ENCODE measurements at regions of chr16 and their contacts with region 1.

Region 1: GRCh38 chr16:22297114-22297878 is at the start of gene POLR3E:
- DNase-seq: peak; percentile 98
- H3K4me3 Mint-ChIP-seq: peak within 1 kb of the TSS; percentile 86
- H3K27ac Mint-ChIP-seq: peak within 1 kb of the TSS; percentile 96
- H3K4me1 Mint-ChIP-seq: peaks cover 33% of the 10 kb centered on the region
- H3K27me3 Mint-ChIP-seq: no peaks in the 10 kb centered on the region
- CTCF ChIP-seq: peak; percentile 89
- total RNA-seq, gene POLR3E: 53.2 and 73.8 TPM in 2 replicates

Region 2: GRCh38 chr16:22018559-22018958 is 278.7 kb before region 1 on chr16:
- CTCF ChIA-PET with region 1: no interaction called
- POLR2A ChIA-PET with region 1: no interaction called
- intact Hi-C with region 1: no loop called
- DNase-seq: no peak
- H3K4me3 Mint-ChIP-seq: no peak overlapping the region
- H3K27ac Mint-ChIP-seq: peak overlapping the region; percentile 24
- H3K4me1 Mint-ChIP-seq: peaks cover 25% of the 10 kb centered on the region
- H3K27me3 Mint-ChIP-seq: no peaks in the 10 kb centered on the region
- CTCF ChIP-seq: no peak

Region 3: GRCh38 chr16:22077700-22078313 is 219.5 kb before region 1 on chr16:
- CTCF ChIA-PET with region 1: no interaction called
- POLR2A ChIA-PET with region 1: no interaction called
- intact Hi-C with region 1: no loop called
- DNase-seq: peak; percentile 69
- H3K4me3 Mint-ChIP-seq: no peak overlapping the region
- H3K27ac Mint-ChIP-seq: no peak overlapping the region
- H3K4me1 Mint-ChIP-seq: no peaks in the 10 kb centered on the region
- H3K27me3 Mint-ChIP-seq: no peaks in the 10 kb centered on the region
- CTCF ChIP-seq: peak; percentile 81

Region 4: DNA sequence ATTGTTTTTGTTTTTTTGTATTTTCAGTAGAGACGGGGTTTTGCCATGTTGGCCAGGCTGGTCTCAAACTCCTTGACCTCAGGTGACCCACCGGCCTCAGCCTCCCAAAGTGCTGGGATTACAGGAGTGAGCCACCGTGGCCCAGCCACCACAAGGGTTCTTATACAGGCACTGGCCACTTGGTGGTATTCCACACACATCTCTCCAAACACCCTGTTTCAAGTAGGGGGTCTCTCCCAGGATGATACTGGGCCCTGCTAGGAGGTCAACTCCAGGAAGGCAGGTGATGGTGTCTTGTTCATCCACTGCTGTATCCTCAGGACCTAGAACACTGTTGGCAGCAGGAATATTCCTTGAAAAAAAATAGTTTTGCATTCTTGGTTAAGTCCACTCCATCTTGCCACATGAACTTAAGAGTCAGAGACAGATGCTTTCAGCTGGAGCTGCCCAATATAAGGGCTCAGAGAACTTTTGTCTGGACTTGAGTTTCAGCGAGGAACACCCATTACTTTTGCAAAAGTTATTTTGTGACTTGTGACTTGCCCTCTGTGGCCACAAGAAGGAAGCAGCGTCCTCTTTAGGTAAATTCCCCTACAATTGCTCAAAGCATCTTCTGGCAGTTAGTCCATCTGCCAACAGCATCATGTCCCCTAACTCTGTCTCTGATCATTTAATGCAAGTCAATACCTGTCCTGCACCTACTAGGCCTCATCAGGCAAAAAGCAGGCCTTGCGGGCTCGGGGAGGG is 98.6 kb before region 1 on chr16:
- CTCF ChIA-PET with region 1: interaction called, 64 read pairs
- POLR2A ChIA-PET with region 1: interaction called, 104 read pairs
- intact Hi-C with region 1: loop called (anchors 1 kb)
- DNase-seq: peak; percentile 35
- H3K4me3 Mint-ChIP-seq: peak overlapping the region; percentile 29
- H3K27ac Mint-ChIP-seq: peak overlapping the region; percentile 86
- H3K4me1 Mint-ChIP-seq: peaks cover 23% of the 10 kb centered on the region
- H3K27me3 Mint-ChIP-seq: no peaks in the 10 kb centered on the region
- CTCF ChIP-seq: no peak

Region 5: GRCh38 chr16:22206013-22206841 is 91.1 kb before region 1 on chr16 and contains the start of gene EEF2K:
- CTCF ChIA-PET with region 1: interaction called, 35 read pairs
- POLR2A ChIA-PET with region 1: interaction called, 104 read pairs
- intact Hi-C with region 1: loop called (anchors 1 kb)
- DNase-seq: peak; percentile 96
- H3K4me3 Mint-ChIP-seq: peak within 1 kb of the TSS; percentile 79
- H3K27ac Mint-ChIP-seq: peak within 1 kb of the TSS; percentile 70
- H3K4me1 Mint-ChIP-seq: peaks cover 19% of the 10 kb centered on the region
- H3K27me3 Mint-ChIP-seq: no peaks in the 10 kb centered on the region
- CTCF ChIP-seq: peak; percentile 83
- total RNA-seq, gene EEF2K: 15.0 and 15.9 TPM in 2 replicates

Region 6: DNA sequence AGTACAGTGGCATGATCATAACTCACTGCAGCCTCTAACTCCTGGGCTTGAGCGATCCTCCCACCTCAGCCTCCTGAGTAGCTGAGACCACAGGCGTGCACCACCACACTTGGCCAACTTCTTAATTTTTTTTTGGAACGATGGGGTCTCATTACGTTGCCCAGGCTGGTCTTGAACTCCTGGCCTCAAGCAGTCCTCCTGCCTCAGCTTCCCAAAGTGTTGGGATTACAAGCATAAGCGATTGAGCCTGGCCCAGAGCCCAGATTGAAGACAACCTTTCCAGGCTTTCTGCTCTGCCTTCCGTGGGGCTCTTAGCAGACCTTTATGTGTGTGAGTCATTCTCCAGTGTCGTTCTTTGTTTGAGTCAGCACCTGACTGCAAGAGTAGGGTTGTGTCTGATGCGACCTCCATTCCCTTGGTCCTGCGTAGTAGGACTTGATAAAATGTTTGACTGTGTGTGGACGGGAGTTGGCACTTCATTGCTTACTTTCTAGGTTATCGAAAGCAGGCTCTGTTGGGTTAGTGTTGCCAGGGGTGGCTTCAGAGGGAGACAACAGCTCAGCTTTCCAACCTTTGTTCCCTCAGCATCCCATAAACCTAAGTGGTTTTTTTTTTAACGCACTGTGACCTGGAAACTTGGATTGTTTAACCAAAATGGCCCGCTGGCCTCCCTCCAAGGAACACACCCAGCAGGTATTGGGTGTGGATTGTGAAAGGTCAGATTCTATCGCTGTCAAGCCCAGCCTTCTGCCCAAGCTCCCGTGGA is 64.8 kb before region 1 on chr16:
- CTCF ChIA-PET with region 1: interaction called, 7 read pairs
- POLR2A ChIA-PET with region 1: interaction called, 13 read pairs
- intact Hi-C with region 1: no loop called
- DNase-seq: peak; percentile 91
- H3K4me3 Mint-ChIP-seq: peak overlapping the region; percentile 55
- H3K27ac Mint-ChIP-seq: peak overlapping the region; percentile 93
- H3K4me1 Mint-ChIP-seq: peaks cover 16% of the 10 kb centered on the region
- H3K27me3 Mint-ChIP-seq: no peaks in the 10 kb centered on the region
- CTCF ChIP-seq: no peak

Region 7: DNA sequence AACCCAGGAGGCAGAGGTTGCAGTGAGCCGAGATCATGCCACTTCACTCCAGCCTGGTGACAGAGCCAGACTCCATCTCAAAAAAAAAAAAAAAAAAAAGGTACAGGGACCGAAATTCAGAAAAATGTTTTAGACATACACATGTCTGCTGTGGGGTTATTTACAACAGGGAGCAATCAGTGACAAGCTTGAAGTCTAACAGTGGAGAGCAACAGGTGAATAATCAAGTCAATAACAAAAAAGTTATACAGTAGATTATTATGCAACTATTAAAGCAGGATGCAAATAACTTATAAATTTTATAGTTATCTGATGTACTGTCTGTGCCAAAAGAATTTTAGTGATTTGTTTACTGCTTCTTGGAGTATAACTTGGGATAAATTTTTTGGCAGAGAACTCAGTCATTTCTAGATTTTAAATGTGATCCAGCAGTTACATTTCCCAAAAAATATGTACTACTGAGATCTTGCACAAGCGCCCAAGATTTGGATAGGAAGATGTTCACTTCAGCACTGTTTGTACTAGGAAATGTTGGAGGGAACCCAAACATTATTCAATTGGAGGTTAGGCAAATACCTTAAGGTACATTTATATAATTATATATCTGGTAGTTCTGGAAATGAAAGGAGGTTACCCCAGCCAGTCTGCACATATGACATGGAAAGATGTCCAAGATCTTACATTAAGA is 57.1 kb before region 1 on chr16:
- CTCF ChIA-PET with region 1: interaction called, 4 read pairs
- POLR2A ChIA-PET with region 1: interaction called, 10 read pairs
- intact Hi-C with region 1: no loop called
- DNase-seq: peak; percentile 47
- H3K4me3 Mint-ChIP-seq: no peak overlapping the region
- H3K27ac Mint-ChIP-seq: no peak overlapping the region
- H3K4me1 Mint-ChIP-seq: peaks cover 7% of the 10 kb centered on the region
- H3K27me3 Mint-ChIP-seq: no peaks in the 10 kb centered on the region
- CTCF ChIP-seq: no peak

Region 8: GRCh38 chr16:22312897-22313781 is 15.8 kb after region 1 on chr16:
- CTCF ChIA-PET with region 1: interaction called, 43 read pairs
- POLR2A ChIA-PET with region 1: interaction called, 5 read pairs
- intact Hi-C with region 1: no loop called
- DNase-seq: no peak
- H3K4me3 Mint-ChIP-seq: no peak overlapping the region
- H3K27ac Mint-ChIP-seq: no peak overlapping the region
- H3K4me1 Mint-ChIP-seq: no peaks in the 10 kb centered on the region
- H3K27me3 Mint-ChIP-seq: no peaks in the 10 kb centered on the region
- CTCF ChIP-seq: no peak

Region 9: GRCh38 chr16:22321339-22322001 is 24.2 kb after region 1 on chr16:
- CTCF ChIA-PET with region 1: interaction called, 14 read pairs
- POLR2A ChIA-PET with region 1: interaction called, 5 read pairs
- intact Hi-C with region 1: no loop called
- DNase-seq: peak; percentile 73
- H3K4me3 Mint-ChIP-seq: no peak overlapping the region
- H3K27ac Mint-ChIP-seq: no peak overlapping the region
- H3K4me1 Mint-ChIP-seq: no peaks in the 10 kb centered on the region
- H3K27me3 Mint-ChIP-seq: no peaks in the 10 kb centered on the region
- CTCF ChIP-seq: peak; percentile 91

Measured in MCF 10A (cell line).